Dendritic cell treated with granulocyte-macrophage colony-stimulating factor and Interleukin-4, amounts not matched to agents 40 ng/mL and 50 ng/mL, for 4 days (primary cell): ENCODE measurements at regions of chr10 and their contacts with region 1.

Region 1: GRCh38 chr10:95374597-95375209 is 83.9 kb upstream of the PDLIM1 start:
- H3K4me3 Mint-ChIP-seq: no peak overlapping the region
- H3K27ac Mint-ChIP-seq: no peak overlapping the region
- H3K4me1 Mint-ChIP-seq: no peaks in the 10 kb centered on the region
- H3K27me3 Mint-ChIP-seq: peaks cover 12% of the 10 kb centered on the region

Region 2: DNA sequence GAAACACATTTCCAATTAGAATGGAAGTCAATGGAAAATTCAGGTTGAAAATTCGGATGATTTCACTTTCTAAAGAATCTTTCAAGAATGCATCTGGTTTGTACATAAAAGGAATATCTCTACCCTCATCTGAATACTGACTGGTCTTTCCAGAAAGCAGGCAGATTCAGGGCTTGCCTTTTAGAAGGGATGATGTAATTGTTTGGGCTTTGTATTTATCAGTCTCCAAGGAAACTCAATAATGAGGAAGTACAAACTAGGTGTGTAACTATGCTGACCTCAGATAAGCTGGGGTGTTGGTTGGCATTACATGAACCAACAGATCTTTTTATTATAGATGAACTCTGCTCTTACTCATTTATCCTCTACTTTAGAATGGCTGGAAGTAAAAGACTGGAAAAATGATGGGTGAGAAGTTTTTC is 108.0 kb before region 1 on chr10:
- intact Hi-C with region 1: no loop called
- H3K4me3 Mint-ChIP-seq: no peak overlapping the region
- H3K27ac Mint-ChIP-seq: peak overlapping the region; percentile 39
- H3K4me1 Mint-ChIP-seq: peaks cover 6% of the 10 kb centered on the region
- H3K27me3 Mint-ChIP-seq: no peaks in the 10 kb centered on the region

Region 3: GRCh38 chr10:95363303-95363912 is 11.3 kb before region 1 on chr10:
- intact Hi-C with region 1: no loop called
- H3K4me3 Mint-ChIP-seq: no peak overlapping the region
- H3K27ac Mint-ChIP-seq: no peak overlapping the region
- H3K4me1 Mint-ChIP-seq: no peaks in the 10 kb centered on the region
- H3K27me3 Mint-ChIP-seq: peaks cover 6% of the 10 kb centered on the region

Region 4: DNA sequence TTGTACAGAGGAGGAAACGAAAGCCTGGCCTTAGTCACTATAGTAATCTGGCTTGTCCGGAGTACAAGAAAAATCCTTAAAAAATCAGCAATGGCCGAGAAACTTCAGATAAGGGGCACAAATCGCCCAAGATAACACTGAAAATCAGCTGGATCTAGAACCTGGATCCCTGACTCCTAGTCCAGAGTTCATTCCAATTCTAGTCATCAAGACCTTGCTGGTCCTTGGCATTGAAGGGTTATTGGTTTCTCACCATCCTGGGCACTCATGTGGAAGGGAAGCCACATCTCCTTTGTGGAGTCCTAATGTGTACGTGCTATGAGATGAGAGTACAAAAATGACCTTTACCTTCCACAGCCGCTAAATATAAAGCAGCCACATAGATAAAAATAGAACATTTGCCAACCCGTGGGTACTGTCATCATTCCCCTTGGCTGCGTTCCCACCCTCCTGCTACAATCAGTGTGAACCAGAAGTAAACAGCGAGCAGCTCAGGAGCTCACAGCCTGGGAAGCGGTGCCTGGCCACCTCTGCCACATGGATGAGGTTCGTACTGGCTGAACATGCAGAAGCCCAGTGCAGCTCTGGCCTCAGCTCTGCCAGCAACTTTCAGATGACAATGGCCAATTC is 32.1 kb after region 1 on chr10:
- intact Hi-C with region 1: no loop called
- H3K4me3 Mint-ChIP-seq: no peak overlapping the region
- H3K27ac Mint-ChIP-seq: no peak overlapping the region
- H3K4me1 Mint-ChIP-seq: no peaks in the 10 kb centered on the region
- H3K27me3 Mint-ChIP-seq: peaks cover 3% of the 10 kb centered on the region

Region 5: GRCh38 chr10:95445837-95446486 is 71.3 kb after region 1 on chr10:
- intact Hi-C with region 1: loop called (anchors 1 kb)
- H3K4me3 Mint-ChIP-seq: no peak overlapping the region
- H3K27ac Mint-ChIP-seq: no peak overlapping the region
- H3K4me1 Mint-ChIP-seq: no peaks in the 10 kb centered on the region
- H3K27me3 Mint-ChIP-seq: no peaks in the 10 kb centered on the region

Region 6: DNA sequence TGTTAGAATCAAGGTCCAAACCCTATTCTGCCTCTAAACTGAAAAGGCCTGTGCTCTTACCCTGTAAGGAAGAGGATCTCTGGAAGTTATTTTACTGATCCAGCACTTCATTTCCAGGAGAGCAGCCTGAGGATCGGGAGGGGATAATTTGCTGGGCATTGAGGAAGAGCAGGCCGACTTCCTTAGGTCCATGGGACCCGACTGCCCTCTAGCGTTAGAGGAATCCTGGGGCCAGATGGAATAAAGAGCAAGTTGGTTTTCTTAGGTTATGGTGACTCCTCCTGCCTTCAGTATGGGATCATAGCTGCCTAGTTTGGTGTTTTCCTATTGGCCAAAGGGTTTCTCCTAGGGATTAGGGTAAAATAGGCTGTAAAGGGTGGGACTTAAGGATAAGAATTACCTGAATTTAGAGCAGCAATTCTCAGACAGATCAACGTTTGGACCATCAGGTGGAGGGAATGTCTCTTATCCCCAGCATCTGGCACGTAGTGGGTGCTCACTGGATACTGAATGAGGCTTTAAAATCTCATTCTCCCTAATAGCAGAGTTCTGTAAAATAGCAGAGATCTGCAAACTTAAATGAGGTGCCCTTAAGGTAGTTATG is 226.5 kb after region 1 on chr10:
- intact Hi-C with region 1: loop called (anchors 1 kb)
- H3K4me3 Mint-ChIP-seq: no peak overlapping the region
- H3K27ac Mint-ChIP-seq: no peak overlapping the region
- H3K4me1 Mint-ChIP-seq: peaks cover 7% of the 10 kb centered on the region
- H3K27me3 Mint-ChIP-seq: no peaks in the 10 kb centered on the region